RWPE1 (cell line): ENCODE measurements at regions of chr10 and their contacts with region 1.

Region 1: DNA sequence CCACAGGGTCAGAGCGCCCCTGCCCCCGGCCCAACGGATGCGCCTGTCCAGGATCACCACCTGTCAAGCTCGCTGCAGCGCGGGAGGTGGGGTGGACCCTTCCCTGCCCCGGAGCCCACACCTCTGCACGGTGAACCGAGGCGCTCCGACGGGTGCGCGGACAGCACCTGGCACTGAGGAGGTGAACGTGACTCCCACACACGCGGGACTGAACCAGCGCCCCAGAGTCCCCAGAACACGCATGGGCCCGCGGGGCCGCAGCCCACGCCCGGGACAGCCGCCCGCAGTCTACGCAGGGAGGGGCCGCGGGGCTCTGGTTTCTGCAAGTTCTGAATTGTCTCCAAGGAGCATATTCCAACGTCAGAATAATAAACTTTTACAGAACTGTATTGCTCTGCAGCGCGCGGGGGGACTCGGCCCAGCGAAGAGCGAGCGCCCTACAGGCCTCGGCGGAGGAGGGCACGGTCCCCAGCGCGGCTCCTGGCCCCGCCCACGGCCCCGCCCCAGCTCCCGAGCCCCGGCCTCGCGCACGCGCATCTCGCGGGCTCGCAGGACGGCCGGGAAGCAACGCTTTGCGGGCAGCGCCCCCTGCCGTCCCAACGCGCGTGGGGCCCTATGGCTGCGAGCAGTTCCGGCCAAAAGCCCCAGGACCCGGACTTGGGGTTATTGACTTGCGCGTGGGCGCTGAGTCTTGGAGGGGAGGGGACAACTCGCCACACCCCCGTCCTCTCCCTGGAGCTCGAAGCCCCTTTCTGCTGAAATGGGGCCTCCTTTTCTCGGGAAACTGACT is 29.7 kb downstream of the OAT start:
- DNase-seq: peak; percentile 98
- H3K27ac ChIP-seq: peak overlapping the region; percentile 69
- CTCF ChIP-seq: peak; percentile 92

Region 2: DNA sequence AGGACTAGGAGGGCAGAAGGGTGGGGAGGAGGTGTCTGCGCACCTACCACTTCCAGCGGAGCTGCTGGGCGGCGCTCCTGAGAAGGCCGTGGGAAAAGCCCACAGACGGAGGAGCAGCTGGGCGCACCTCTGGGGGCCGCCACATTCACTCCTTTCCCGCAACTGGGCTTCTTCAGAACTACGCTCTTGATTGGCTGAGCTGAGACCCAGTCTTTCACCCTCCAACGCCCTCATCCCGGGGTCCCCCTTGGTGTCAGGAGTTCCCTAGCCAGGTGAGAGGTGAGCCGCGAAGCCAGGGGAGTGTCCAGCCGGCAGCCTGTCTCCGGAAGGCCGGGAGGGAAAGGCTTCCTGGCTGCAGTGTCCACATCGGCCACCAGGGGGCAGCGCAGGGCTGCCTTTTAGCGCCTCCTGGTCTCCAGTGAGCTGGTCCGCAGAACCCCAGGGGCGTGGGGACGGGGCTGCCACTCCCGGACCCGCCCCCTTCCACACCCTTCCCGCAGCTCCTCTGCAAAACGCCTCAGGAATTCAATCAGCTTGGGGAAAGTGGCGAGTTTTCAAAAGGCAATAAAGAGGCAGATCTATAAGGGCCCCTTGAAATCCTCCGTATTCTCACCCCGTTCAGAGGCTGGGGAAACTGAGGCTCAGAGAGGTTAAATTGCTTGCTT is 394.5 kb before region 1 on chr10:
- CTCF ChIA-PET with region 1: interaction called, 106 read pairs
- POLR2A ChIA-PET with region 1: no interaction called
- DNase-seq: peak; percentile 96
- H3K27ac ChIP-seq: peak overlapping the region; percentile 95
- CTCF ChIP-seq: peak; percentile 94

Region 3: GRCh38 chr10:124092860-124093773 is 295.9 kb before region 1 on chr10 and contains the start of gene CHST15:
- CTCF ChIA-PET with region 1: interaction called, 15 read pairs
- POLR2A ChIA-PET with region 1: no interaction called
- DNase-seq: peak; percentile 91
- H3K27ac ChIP-seq: peak within 1 kb of the TSS; percentile 85
- CTCF ChIP-seq: peak; percentile 24

Region 4: DNA sequence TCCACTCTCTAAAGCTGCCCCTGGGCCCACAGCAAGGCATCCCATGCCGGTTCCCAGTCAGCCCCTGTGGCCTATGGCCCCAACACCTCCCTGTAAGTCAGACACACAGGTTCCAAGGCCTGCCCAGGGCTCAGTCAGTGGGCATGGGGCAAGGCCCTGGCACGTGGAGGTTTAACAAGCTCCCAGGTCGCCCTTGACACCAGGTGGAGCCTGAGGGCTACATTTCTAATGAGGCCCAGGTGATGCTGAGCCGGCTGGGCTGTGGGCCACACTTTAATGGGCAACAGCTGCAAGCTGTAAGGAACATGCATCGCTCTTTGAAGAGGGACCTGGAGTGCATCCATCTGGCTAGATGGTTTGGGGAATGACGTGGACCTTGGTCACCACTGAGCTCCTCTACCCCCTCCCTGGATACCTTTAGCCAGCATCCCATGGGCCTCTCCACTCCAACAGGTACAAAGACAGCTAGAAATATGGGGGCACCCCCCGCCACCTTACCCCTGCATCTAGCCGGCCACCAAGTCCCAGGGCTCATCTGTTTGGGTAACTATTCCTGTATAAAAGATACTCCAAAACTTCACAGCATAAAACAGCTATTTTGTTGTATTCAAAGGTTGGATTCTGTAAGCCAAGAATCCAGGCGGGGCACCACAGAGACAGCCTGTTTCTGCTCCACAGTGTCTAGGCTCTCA is 92.8 kb before region 1 on chr10:
- CTCF ChIA-PET with region 1: interaction called, 13 read pairs
- POLR2A ChIA-PET with region 1: no interaction called
- DNase-seq: peak; percentile 51
- H3K27ac ChIP-seq: no peak overlapping the region
- CTCF ChIP-seq: no peak

Region 5: GRCh38 chr10:124378881-124379471 is 10.0 kb before region 1 on chr10:
- CTCF ChIA-PET with region 1: interaction called, 17 read pairs
- POLR2A ChIA-PET with region 1: no interaction called
- DNase-seq: peak; percentile 97
- H3K27ac ChIP-seq: peak overlapping the region; percentile 80
- CTCF ChIP-seq: no peak

Region 6: GRCh38 chr10:124417895-124418725 is 29.1 kb after region 1 on chr10:
- CTCF ChIA-PET with region 1: interaction called, 11 read pairs
- POLR2A ChIA-PET with region 1: no interaction called
- DNase-seq: peak; percentile 63
- H3K27ac ChIP-seq: peak overlapping the region; percentile 80
- CTCF ChIP-seq: no peak